Gastrocnemius medialis (tissue), 4 donors: ENCODE measurements at regions of chr9 and their contacts with region 1.

Region 1: DNA sequence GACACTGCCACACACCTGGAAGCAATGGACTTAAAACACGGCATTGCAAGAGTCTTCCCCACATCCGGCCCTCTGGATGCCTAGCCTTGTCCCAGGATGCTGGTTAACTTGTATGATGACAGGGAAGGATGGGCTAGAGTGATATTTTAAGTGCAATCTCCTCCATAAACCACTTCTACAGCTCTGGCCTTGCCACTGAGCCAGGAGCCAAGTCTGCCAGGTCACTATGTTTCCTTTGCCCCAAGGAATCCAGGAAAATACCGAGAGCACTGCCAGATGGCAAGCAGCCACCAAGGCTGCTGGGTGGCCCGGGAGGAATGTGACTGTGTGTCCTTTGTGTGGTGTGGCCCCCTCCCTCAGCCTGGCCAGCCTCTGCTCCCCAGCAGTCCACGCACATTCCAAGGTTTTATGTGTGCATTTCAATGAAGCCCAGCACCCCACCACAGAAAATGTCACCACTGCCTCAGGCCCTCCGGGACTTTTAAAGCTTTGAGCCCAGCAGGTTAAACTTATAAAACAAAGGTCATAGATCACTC is 106.0 kb downstream of the FRMD3 start:
- DNase-seq: peak; percentile 66 to 68
- ATAC-seq: peak; percentile 63 to 69
- H3K4me3 ChIP-seq: peak overlapping the region in 1 of 4 donors; percentile 11
- H3K27ac ChIP-seq: peak overlapping the region; percentile 66 to 84 (median 72)
- H3K4me1 ChIP-seq: peaks cover 28 to 38% of the 10 kb centered on the region in 2 donors
- H3K27me3 ChIP-seq: no peaks in the 10 kb centered on the region
- CTCF ChIP-seq: no peak
- POLR2A ChIP-seq: no peak

Region 2: GRCh38 chr9:83355024-83355444 is 77.1 kb before region 1 on chr9:
- in situ Hi-C with region 1: no loop called
- intact Hi-C with region 1: no loop called
- DNase-seq: no peak
- ATAC-seq: peak; percentile 26 to 46
- H3K4me3 ChIP-seq: no peak overlapping the region
- H3K27ac ChIP-seq: peak overlapping the region; percentile 23 to 37 (median 26)
- H3K4me1 ChIP-seq: no peaks in the 10 kb centered on the region
- H3K27me3 ChIP-seq: no peaks in the 10 kb centered on the region
- CTCF ChIP-seq: no peak
- POLR2A ChIP-seq: no peak

Region 3: DNA sequence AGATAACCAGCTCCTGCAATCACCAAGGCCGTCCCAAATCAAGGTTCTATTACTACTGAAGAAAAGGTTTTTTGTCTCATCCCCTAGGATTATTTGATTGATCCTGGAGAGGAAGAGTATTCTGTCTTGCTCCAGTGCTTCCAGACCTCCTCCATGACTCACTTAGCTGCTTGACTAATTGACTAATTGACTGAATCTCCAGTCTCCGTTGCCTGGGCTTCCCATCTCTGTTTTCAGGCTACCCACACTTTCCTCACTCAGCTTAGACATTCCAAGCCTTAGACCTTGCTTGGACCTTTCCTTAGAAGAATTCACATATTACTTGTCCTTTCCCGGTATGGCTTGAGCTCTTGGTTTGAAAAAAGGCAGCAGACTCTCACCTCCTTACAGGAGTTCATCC is 45.4 kb after region 1 on chr9:
- in situ Hi-C with region 1: no loop called
- intact Hi-C with region 1: loop called (anchors 5 kb)
- DNase-seq: no peak
- ATAC-seq: no peak
- H3K4me3 ChIP-seq: no peak overlapping the region
- H3K27ac ChIP-seq: peak overlapping the region; percentile 30 to 49 (median 38)
- H3K4me1 ChIP-seq: peaks cover 6 to 8% of the 10 kb centered on the region in 2 donors
- H3K27me3 ChIP-seq: no peaks in the 10 kb centered on the region
- CTCF ChIP-seq: no peak
- POLR2A ChIP-seq: no peak